ENCODE measurements at regions of chr1 and their contacts with region 1.

Region 1: GRCh38 chr1:213015099-213016050 is at the start of gene ANGEL2:
- H3K4me3 ChIP-seq: peak within 1 kb of the TSS; percentile 96
- H3K27ac ChIP-seq: peak within 1 kb of the TSS; percentile 89
- H3K4me1 ChIP-seq: no peaks in the 10 kb centered on the region; the same call in 1 of the 2 replicates
- CTCF ChIP-seq: no peak

Region 2: DNA sequence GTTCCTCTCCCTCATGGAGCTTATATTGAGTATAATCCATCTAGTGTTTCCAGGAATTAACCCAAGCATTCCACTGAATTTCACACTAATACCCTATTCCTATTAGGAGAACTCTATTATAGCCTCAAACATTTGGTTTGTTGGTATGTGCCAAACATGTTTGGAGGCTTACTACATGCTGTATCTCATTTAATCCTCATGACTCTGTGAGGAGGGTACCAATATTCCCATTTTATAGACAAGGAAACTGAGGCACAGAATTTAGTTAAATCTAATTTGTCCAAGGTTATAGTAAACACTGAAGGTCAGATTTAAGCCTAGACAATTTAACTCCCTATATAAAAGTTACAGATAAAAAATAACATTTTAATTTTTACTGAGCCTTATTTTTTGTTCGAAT is 148.2 kb before region 1 on chr1:
- CTCF ChIA-PET with region 1: no interaction called
- POLR2A ChIA-PET with region 1: interaction called, 11 read pairs
- H3K4me3 ChIP-seq: no peak overlapping the region
- H3K27ac ChIP-seq: no peak overlapping the region
- H3K4me1 ChIP-seq: peaks cover 2% of the 10 kb centered on the region; the same call in 1 of the 2 replicates
- CTCF ChIP-seq: no peak

Region 3: GRCh38 chr1:213041443-213041842 is 26.1 kb after region 1 on chr1:
- CTCF ChIA-PET with region 1: no interaction called
- POLR2A ChIA-PET with region 1: no interaction called
- H3K4me3 ChIP-seq: no peak overlapping the region
- H3K27ac ChIP-seq: no peak overlapping the region
- H3K4me1 ChIP-seq: no peaks in the 10 kb centered on the region
- CTCF ChIP-seq: no peak

Measured in HEK293 (cell line).